Colonic mucosa (tissue), 4 donors: ENCODE measurements at regions of chr20 and their contacts with region 1.

Region 1: GRCh38 chr20:4089756-4090487 is 74.6 kb upstream of the RNF24 start:
- DNase-seq: no peak
- H3K4me3 ChIP-seq: no peak overlapping the region
- H3K27ac ChIP-seq: no peak overlapping the region
- H3K4me1 ChIP-seq: no peaks in the 10 kb centered on the region
- H3K27me3 ChIP-seq: no peaks in the 10 kb centered on the region
- CTCF ChIP-seq: no peak

Region 2: GRCh38 chr20:4014031-4014474 is 75.9 kb before region 1 on chr20:
- intact Hi-C with region 1: loop called (anchors 5 kb)
- DNase-seq: peak; percentile 78
- H3K4me3 ChIP-seq: peak overlapping the region; percentile 79
- H3K27ac ChIP-seq: peak overlapping the region; percentile 64
- H3K4me1 ChIP-seq: peaks cover 16% of the 10 kb centered on the region
- H3K27me3 ChIP-seq: no peaks in the 10 kb centered on the region
- CTCF ChIP-seq: peak; percentile 35